Activated naive CD8-positive, alpha-beta T cell treated with anti-CD3 and anti-CD28 coated beads, Interleukin-2, amount 10 ng/mL, durations not matched to agents 7 days and 5 days (primary cell): ENCODE measurements at regions of chr10 and their contacts with region 1.

Region 1: DNA sequence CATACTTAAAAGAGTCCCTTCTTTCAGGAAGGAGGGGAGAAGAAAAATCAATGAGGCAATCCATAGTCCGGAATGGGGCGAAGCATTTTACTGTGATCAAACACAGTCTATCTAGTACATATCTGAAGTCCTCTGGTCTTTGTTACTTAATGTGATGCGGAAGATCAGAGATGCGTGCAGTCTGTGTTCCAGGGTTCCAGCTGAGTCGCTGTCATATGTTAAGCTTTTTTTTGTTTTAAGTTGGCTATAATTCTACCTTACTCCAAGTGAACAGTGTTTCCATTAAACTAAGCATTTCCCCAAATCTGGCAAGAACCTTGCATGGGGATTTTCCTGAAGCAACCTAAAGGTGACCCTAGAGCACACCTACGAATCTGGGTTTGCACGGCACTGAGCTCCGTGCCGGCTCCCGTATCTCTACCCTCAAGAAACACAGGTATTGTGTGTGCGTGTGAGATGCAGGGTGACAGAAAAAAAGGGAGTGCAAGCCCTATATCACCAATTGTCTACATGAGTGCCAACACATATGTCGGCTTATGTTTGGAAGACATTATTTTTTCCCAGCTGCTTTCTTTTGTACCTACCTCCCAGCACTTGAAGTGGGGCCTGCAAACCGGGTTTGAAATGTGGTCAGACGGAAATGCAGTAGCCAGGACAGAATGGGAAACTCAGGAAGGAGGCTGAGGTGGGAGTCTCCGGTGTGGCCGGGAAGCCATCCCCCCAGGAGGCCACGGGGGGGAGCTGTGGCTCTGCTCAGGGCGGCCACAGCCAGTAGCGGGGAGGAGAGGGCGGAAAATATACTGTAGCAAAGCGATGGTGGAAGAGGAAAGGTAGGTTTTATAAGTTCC is 435.8 kb upstream of the MGMT start:
- DNase-seq: peak; percentile 80
- ATAC-seq: peak; percentile 20
- H3K4me3 Mint-ChIP-seq: no peak overlapping the region
- H3K27ac Mint-ChIP-seq: no peak overlapping the region
- H3K4me1 Mint-ChIP-seq: peaks cover 24% of the 10 kb centered on the region
- H3K27me3 Mint-ChIP-seq: peaks cover 17% of the 10 kb centered on the region

Region 2: GRCh38 chr10:129057856-129058663 is 26.8 kb after region 1 on chr10:
- POLR2A ChIA-PET with region 1: interaction called, 17 read pairs
- DNase-seq: peak; percentile 84
- ATAC-seq: peak; percentile 90
- H3K4me3 Mint-ChIP-seq: peak overlapping the region; percentile 63
- H3K27ac Mint-ChIP-seq: peak overlapping the region; percentile 36
- H3K4me1 Mint-ChIP-seq: peaks cover 23% of the 10 kb centered on the region
- H3K27me3 Mint-ChIP-seq: peaks cover 60% of the 10 kb centered on the region

Region 3: GRCh38 chr10:129466703-129467358 is 435.6 kb after region 1 on chr10 and contains the start of gene MGMT:
- POLR2A ChIA-PET with region 1: interaction called, 10 read pairs
- DNase-seq: peak; percentile 99
- ATAC-seq: peak; percentile 96
- H3K4me3 Mint-ChIP-seq: peak within 1 kb of the TSS; percentile 83
- H3K27ac Mint-ChIP-seq: peak within 1 kb of the TSS; percentile 83
- H3K4me1 Mint-ChIP-seq: peaks cover 9% of the 10 kb centered on the region
- H3K27me3 Mint-ChIP-seq: no peaks in the 10 kb centered on the region
- total RNA-seq, gene MGMT: 24.0 to 24.7 TPM